ENCODE measurements at regions of chr15 and their contacts with region 1.

Region 1: GRCh38 chr15:36517758-36518157 is 61.7 kb upstream of the CDIN1 start:
- DNase-seq: no peak
- CTCF ChIP-seq: no peak

Region 2: GRCh38 chr15:35329521-35329961 is 1188.2 kb before region 1 on chr15:
- CTCF ChIA-PET with region 1: no interaction called
- POLR2A ChIA-PET with region 1: no interaction called
- DNase-seq: no peak
- CTCF ChIP-seq: no peak

Region 3: GRCh38 chr15:36479200-36479896 is 38.4 kb before region 1 on chr15:
- CTCF ChIA-PET with region 1: no interaction called
- POLR2A ChIA-PET with region 1: no interaction called
- DNase-seq: no peak
- CTCF ChIP-seq: no peak

Region 4: DNA sequence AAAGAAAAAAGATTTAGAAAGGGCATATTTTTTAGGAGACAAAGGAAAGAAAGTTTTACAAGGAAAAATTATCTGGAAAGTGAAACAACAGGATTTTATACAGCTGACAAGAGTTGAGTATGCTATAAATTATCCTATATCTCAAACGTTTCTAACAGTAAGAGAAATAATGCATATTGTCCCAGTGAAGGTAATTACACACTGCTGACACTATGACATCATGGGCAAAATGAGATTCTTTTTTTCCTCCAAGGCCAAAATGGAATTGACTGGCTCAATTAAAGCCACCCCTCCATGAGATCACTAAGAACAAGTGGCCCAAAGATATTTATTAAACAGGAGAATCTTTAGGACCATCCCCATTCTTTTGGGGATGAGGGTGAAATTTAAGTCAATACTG is 10.3 kb before region 1 on chr15:
- CTCF ChIA-PET with region 1: no interaction called
- POLR2A ChIA-PET with region 1: no interaction called
- DNase-seq: no peak
- CTCF ChIP-seq: no peak

Region 5: DNA sequence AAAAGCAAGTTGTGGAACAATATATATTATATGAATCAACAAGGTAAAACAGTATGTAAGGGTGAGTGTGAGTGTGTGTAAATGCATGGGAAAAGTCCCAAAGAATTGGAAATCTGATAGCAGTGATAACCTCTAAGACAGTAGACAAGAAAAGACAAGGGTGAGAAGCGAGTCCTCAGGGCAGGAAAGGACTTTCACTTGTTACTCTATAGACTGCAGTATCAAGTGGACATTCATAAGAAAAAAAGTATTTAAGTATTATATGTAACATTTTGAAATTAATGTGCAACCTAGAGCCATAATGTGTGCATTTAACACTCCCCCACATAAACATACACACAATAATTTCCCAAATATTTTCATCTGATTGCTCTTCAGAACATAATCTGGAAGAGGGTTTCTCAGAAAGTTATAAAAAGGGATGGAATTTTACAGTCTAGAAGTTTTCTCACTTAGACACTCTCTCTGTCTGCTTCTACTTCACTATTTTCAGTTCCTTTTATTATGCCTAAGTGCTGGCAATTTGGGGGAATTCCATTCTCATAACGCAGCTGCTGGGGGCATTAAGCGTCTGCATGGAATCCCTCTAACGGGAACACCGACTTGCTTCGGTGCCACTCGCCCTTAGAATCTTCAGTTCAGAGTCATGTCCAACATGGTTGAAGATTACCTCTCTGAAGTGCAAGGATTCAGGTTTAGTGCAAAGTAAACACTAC is 11.7 kb after region 1 on chr15:
- CTCF ChIA-PET with region 1: interaction called, 12 read pairs
- POLR2A ChIA-PET with region 1: no interaction called
- DNase-seq: peak; percentile 20
- CTCF ChIP-seq: no peak

Measured in GM10248 (cell line).